ENCODE measurements at regions of chr2 and their contacts with region 1.

Region 1: GRCh38 chr2:168212866-168213265 is 34.5 kb downstream of the STK39 start:
- DNase-seq: no peak
- ATAC-seq: no peak
- H3K4me3 ChIP-seq: no peak overlapping the region
- H3K4me3 Mint-ChIP-seq: peak overlapping the region in 1 of 3 donors; percentile 7
- H3K27ac ChIP-seq: no peak overlapping the region
- H3K27ac Mint-ChIP-seq: no peak overlapping the region
- H3K4me1 ChIP-seq: peaks cover 8 to 17% of the 10 kb centered on the region in 2 experiments
- H3K4me1 Mint-ChIP-seq: peaks cover 49 to 56% (median 51%) of the 10 kb centered on the region in 3 donors
- H3K27me3 ChIP-seq: no peaks in the 10 kb centered on the region
- H3K27me3 Mint-ChIP-seq: no peaks in the 10 kb centered on the region

Region 2: DNA sequence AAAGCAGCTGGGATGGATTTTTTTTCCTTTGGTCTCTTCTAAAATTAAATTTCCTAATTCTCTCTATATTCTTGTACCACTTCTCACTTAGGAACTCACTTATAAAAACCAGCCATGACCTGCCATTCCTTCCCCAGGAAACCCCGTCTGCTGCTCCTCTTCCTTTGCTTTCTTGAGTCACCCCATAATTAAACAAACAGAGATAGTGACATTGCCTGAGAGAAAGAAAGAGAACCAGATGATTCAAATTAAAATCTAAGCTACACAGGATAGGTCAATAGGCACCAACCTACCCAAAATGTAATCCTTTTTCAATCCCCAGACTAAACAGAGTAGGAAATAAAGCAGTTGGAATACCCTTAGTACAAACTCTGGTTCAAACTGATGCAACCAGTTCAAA is 24.9 kb after region 1 on chr2:
- CTCF ChIA-PET with region 1: no interaction called
- POLR2A ChIA-PET with region 1: interaction called in 1 of 2 experiments, 12 read pairs
- DNase-seq: no peak
- ATAC-seq: no peak
- H3K4me3 ChIP-seq: no peak overlapping the region
- H3K4me3 Mint-ChIP-seq: no peak overlapping the region
- H3K27ac ChIP-seq: no peak overlapping the region
- H3K27ac Mint-ChIP-seq: no peak overlapping the region
- H3K4me1 ChIP-seq: peaks cover 30 to 50% of the 10 kb centered on the region in 2 experiments
- H3K4me1 Mint-ChIP-seq: peaks cover 16 to 37% (median 22%) of the 10 kb centered on the region in 3 donors
- H3K27me3 ChIP-seq: no peaks in the 10 kb centered on the region
- H3K27me3 Mint-ChIP-seq: no peaks in the 10 kb centered on the region